ENCODE measurements at regions of chr16 and their contacts with region 1.

Region 1: GRCh38 chr16:66894948-66895688 is 14.8 kb downstream of the PDP2 start:
- DNase-seq: peak; percentile 69
- ATAC-seq: peak; percentile 85
- H3K4me3 Mint-ChIP-seq: no peak overlapping the region
- H3K27ac Mint-ChIP-seq: peak overlapping the region; percentile 19
- H3K4me1 Mint-ChIP-seq: peaks cover 7% of the 10 kb centered on the region
- H3K27me3 Mint-ChIP-seq: no peaks in the 10 kb centered on the region; the same call in 1 of the 2 replicates
- CTCF ChIP-seq: peak; percentile 32; the same call in 1 of the 2 replicates

Region 2: DNA sequence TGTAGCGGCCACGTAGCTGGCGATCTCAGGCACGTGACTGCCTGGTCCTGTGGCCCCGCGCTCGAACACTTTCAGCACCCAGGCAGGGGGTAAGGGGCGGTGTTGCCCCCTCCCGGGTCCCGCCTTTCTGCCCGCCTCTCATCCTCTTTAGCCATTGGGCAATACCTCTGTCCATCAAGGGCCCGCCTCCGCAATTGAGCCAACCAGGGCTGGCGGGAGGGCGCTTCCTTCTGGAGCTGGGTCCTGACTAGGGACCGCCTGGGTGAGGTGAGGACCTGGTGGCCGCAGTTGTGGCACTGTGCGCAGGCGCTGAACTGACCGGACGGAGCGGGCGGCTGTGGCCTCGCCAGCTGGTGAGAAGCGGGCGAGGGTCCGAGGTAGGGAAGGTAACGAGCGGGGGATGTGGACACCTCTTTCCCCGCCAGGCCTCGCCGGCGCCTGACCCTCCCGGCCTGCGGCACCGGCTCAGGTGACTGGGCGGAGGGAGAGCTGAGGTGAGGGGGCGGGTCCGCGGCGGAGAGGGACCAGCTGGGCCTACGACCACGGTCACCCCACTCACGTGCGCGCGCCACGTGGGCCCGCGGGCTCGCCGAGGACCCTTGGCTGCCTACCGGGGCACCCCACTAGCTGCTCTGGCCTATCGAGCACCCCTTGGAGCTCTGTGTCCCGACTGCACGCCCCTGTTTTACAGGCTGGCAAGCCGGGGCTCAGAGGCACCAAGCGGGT is 14.7 kb before region 1 on chr16 and contains the start of gene PDP2:
- CTCF ChIA-PET with region 1: interaction called, 19 read pairs
- POLR2A ChIA-PET with region 1: interaction called, 3 read pairs
- DNase-seq: peak; percentile 97
- ATAC-seq: peak; percentile 99
- H3K4me3 Mint-ChIP-seq: peak within 1 kb of the TSS; percentile 95
- H3K27ac Mint-ChIP-seq: peak within 1 kb of the TSS; percentile 93
- H3K4me1 Mint-ChIP-seq: peaks cover 9% of the 10 kb centered on the region
- H3K27me3 Mint-ChIP-seq: peaks cover 11% of the 10 kb centered on the region
- CTCF ChIP-seq: no peak
- total RNA-seq, gene PDP2: 26.4 to 28.4 TPM (median 27.0 TPM) in 3 replicates

Region 3: GRCh38 chr16:66905633-66906539 is 10.8 kb after region 1 on chr16:
- CTCF ChIA-PET with region 1: interaction called, 32 read pairs
- POLR2A ChIA-PET with region 1: interaction called, 4 read pairs
- DNase-seq: peak; percentile 55
- ATAC-seq: peak; percentile 90
- H3K4me3 Mint-ChIP-seq: no peak overlapping the region
- H3K27ac Mint-ChIP-seq: peak overlapping the region; percentile 88
- H3K4me1 Mint-ChIP-seq: peaks cover 5% of the 10 kb centered on the region; the same call in 1 of the 2 replicates
- H3K27me3 Mint-ChIP-seq: peaks cover 15% of the 10 kb centered on the region
- CTCF ChIP-seq: no peak

Region 4: GRCh38 chr16:66911112-66911511 is 16.0 kb after region 1 on chr16:
- CTCF ChIA-PET with region 1: interaction called, 32 read pairs
- POLR2A ChIA-PET with region 1: no interaction called
- DNase-seq: no peak
- ATAC-seq: no peak
- H3K4me3 Mint-ChIP-seq: no peak overlapping the region
- H3K27ac Mint-ChIP-seq: no peak overlapping the region
- H3K4me1 Mint-ChIP-seq: no peaks in the 10 kb centered on the region
- H3K27me3 Mint-ChIP-seq: peaks cover 13% of the 10 kb centered on the region
- CTCF ChIP-seq: no peak

Region 5: GRCh38 chr16:66918803-66919568 is 23.9 kb after region 1 on chr16 and contains the start of gene CDH16:
- CTCF ChIA-PET with region 1: interaction called, 175 read pairs
- POLR2A ChIA-PET with region 1: no interaction called
- DNase-seq: no peak
- ATAC-seq: no peak
- H3K4me3 Mint-ChIP-seq: no peak within 1 kb of the TSS
- H3K27ac Mint-ChIP-seq: no peak within 1 kb of the TSS; the same call in 1 of the 2 replicates
- H3K4me1 Mint-ChIP-seq: no peaks in the 10 kb centered on the region
- H3K27me3 Mint-ChIP-seq: peaks cover 19% of the 10 kb centered on the region
- CTCF ChIP-seq: no peak
- total RNA-seq, gene CDH16: not detected in 3 replicates

Region 6: GRCh38 chr16:66924527-66925321 is 29.6 kb after region 1 on chr16:
- CTCF ChIA-PET with region 1: interaction called, 175 read pairs
- POLR2A ChIA-PET with region 1: no interaction called
- DNase-seq: peak; percentile 74
- ATAC-seq: peak; percentile 85
- H3K4me3 Mint-ChIP-seq: peak overlapping the region; percentile 73
- H3K27ac Mint-ChIP-seq: no peak overlapping the region
- H3K4me1 Mint-ChIP-seq: peaks cover 7% of the 10 kb centered on the region; the same call in 1 of the 2 replicates
- H3K27me3 Mint-ChIP-seq: peaks cover 59% of the 10 kb centered on the region
- CTCF ChIP-seq: no peak

Region 7: DNA sequence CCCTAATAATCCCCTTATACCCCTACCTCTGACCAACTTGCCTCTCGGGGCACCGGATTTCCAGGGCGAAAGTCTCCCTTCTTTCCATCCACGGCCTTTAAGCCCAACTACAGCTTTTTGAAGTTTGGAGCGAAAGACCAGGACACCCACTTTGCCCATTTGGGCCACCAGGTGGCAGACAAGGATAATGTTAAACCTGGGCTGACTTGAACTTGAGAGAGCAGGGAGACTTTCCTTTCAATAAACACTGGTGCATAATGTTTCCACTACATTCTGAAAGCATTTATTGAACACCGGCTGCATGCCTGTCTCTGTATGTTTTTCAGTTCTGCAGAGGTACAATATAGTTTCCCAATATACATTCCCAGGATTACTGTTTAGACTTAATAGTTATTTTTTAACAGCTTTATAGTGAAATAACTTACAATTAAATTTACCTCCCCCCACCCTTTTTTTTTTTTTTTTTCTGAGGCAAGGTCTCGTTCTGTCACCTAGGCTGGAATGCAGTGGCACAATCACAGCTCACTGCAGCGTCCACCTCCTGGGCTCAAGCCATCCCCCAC is 59.1 kb after region 1 on chr16:
- CTCF ChIA-PET with region 1: interaction called, 13 read pairs
- POLR2A ChIA-PET with region 1: no interaction called
- DNase-seq: peak; percentile 85
- ATAC-seq: peak; percentile 88
- H3K4me3 Mint-ChIP-seq: no peak overlapping the region
- H3K27ac Mint-ChIP-seq: no peak overlapping the region
- H3K4me1 Mint-ChIP-seq: peaks cover 4% of the 10 kb centered on the region
- H3K27me3 Mint-ChIP-seq: peaks cover 40% of the 10 kb centered on the region
- CTCF ChIP-seq: peak; percentile 62; the same call in 1 of the 2 replicates

Region 8: DNA sequence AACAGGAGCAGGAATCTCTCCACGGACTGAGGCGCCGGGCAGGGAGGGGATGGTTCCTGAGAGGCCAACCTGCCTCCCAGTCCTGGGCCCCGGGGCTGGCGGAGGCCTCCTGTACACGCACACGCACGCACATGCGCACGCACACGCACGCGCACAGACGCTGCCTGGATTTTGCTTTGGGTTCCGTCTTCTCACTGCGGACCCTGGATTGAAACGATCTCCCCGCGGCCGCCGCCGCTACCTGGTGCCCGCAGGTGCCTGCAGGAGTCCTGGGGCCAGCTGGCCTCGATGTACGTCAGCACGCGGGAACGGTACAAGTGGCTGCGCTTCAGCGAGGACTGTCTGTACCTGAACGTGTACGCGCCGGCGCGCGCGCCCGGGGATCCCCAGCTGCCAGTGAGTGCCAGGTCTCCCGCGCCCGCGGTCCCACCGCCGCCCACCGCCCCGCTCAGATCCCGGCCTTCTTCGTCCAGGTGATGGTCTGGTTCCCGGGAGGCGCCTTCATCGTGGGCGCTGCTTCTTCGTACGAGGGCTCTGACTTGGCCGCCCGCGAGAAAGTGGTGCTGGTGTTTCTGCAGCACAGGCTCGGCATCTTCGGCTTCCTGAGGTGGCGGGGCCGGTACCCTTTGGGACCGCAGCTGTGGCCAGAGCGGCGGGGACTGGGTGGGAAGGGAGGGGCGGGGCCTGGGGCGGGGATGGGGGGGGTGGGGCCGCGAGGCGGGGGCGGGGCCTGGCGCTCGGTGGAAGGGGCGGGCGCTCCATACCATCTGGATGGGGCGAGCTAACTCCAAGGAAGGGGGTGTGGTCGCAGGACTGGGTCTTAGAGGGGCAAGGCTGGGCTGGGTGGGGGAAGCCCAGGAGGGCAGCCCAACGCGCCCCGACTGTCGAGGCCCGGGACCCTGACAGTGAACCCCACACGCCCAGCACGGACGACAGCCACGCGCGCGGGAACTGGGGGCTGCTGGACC is 105.5 kb after region 1 on chr16:
- CTCF ChIA-PET with region 1: no interaction called
- POLR2A ChIA-PET with region 1: no interaction called
- DNase-seq: peak; percentile 73
- ATAC-seq: peak; percentile 90
- H3K4me3 Mint-ChIP-seq: peak overlapping the region; percentile 66
- H3K27ac Mint-ChIP-seq: no peak overlapping the region
- H3K4me1 Mint-ChIP-seq: peaks cover 4% of the 10 kb centered on the region
- H3K27me3 Mint-ChIP-seq: peaks cover 80% of the 10 kb centered on the region
- CTCF ChIP-seq: no peak